ENCODE measurements at regions of chr6 and their contacts with region 1.

Region 1: DNA sequence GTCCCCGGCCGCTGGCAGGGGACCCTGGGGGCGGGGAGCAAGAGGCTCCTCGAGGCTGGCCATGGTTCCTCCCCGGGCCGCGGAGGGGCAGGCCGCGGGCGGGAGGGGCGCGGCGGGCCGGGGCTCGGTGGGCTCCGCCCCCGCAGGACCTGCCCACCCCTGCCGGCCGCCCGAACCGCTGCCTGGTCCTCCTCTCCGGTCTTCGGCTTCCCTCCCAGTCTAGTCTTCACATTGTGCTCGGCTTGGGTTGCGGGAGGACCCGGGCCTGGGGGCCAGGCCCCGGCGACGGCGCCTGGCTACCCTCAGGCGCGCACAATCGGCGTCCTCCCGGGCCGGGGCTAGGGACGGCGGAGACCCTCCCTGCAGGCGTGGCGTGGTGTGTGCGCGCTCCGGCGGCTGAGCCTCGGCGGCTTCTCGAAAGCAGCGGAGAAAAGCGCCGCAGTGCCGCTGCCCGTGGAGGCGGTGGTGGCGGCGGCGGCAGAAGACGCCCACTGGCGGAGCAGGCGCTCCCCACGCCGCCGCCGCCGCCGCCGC is at the start of gene PDE10A:
- DNase-seq: no peak
- H3K4me3 Mint-ChIP-seq: no peak within 1 kb of the TSS
- H3K27ac Mint-ChIP-seq: peak within 1 kb of the TSS; percentile 55
- H3K4me1 Mint-ChIP-seq: no peaks in the 10 kb centered on the region
- H3K27me3 Mint-ChIP-seq: peaks cover 52% of the 10 kb centered on the region
- total RNA-seq, gene PDE10A: not detected in 2 replicates

Region 2: GRCh38 chr6:165987483-165988301 is 324.9 kb after region 1 on chr6:
- intact Hi-C with region 1: loop called (anchors 5 kb)
- DNase-seq: no peak
- H3K4me3 Mint-ChIP-seq: no peak overlapping the region
- H3K27ac Mint-ChIP-seq: no peak overlapping the region
- H3K4me1 Mint-ChIP-seq: no peaks in the 10 kb centered on the region
- H3K27me3 Mint-ChIP-seq: peaks cover 37% of the 10 kb centered on the region

Measured in activated T-helper 1 cell treated with anti-CD3 and anti-CD28 coated beads, Interleukin-12 subunit alpha, Interleukin-12 subunit beta, Interleukin-2, Interleukin-4 antibody, amounts not matched to agents 30 ng/mL and 10 ng/mL and 1 ng/mL, durations not matched to agents 14 hours and 24 hours and 36 hours (primary cell).